ENCODE measurements at regions of chr6 and their contacts with region 1.

Region 1: GRCh38 chr6:13336553-13336952 is 8.2 kb upstream of the TBC1D7 start:
- DNase-seq: peak; percentile 72
- ATAC-seq: peak; percentile 73
- H3K4me3 Mint-ChIP-seq: no peak overlapping the region
- H3K27ac Mint-ChIP-seq: no peak overlapping the region
- H3K4me1 Mint-ChIP-seq: peaks cover 51% of the 10 kb centered on the region
- H3K27me3 Mint-ChIP-seq: no peaks in the 10 kb centered on the region
- CTCF ChIP-seq: no peak

Region 2: DNA sequence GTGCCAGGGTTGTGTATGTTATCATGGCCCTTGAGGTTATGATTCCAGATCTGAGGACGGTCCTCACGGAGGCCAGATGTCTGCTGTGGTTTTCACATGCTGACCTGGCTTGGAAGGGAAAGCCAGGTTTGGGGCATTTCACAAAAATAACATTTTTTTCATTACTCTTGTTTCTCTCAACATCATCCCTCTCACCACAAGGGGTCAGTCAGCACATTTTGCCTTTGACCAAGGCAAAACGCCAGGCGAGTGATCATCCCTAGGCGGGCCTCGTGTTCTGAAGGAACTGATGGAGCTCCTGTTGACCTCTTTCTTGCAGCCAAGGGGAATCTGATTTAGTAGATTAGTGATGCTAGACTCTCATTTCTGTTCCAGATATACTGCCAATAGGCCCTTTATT is 141.7 kb before region 1 on chr6:
- CTCF ChIA-PET with region 1: interaction called, 118 read pairs
- POLR2A ChIA-PET with region 1: interaction called, 3 read pairs
- intact Hi-C with region 1: loop called (anchors 1 kb)
- DNase-seq: peak; percentile 21
- ATAC-seq: peak; percentile 82
- H3K4me3 Mint-ChIP-seq: no peak overlapping the region
- H3K27ac Mint-ChIP-seq: no peak overlapping the region
- H3K4me1 Mint-ChIP-seq: peaks cover 11% of the 10 kb centered on the region
- H3K27me3 Mint-ChIP-seq: peaks cover 4% of the 10 kb centered on the region
- CTCF ChIP-seq: peak; percentile 55

Region 3: DNA sequence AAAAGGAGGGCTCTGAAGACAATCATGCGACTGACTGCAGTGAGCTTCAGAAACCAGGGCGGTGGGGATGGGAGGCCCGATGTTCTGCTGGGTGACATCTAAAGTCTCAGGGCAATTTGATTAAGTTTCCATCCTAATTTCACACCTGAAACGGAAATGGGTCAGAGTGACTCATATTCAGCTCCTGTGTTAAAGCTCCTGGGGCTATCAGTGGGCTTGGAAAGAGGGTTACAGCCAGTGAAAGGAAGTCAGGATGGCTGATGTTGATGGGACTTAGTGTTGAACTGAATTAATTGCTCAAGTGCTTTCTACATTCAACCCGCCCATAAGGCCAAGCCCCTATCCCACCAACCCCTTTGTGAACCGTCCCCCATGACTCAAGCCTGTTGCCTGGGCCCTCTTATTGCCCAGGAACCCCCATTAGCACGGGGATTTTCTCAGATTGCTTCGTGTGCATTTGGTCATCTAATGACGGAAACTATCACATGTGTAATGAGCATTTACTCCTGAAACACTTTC is 38.9 kb after region 1 on chr6:
- CTCF ChIA-PET with region 1: interaction called, 27 read pairs
- POLR2A ChIA-PET with region 1: interaction called, 4 read pairs
- intact Hi-C with region 1: no loop called
- DNase-seq: no peak
- ATAC-seq: peak; percentile 77
- H3K4me3 Mint-ChIP-seq: no peak overlapping the region
- H3K27ac Mint-ChIP-seq: peak overlapping the region; percentile 50
- H3K4me1 Mint-ChIP-seq: peaks cover 55% of the 10 kb centered on the region
- H3K27me3 Mint-ChIP-seq: no peaks in the 10 kb centered on the region
- CTCF ChIP-seq: no peak

Region 4: GRCh38 chr6:13526727-13527670 is 190.4 kb after region 1 on chr6:
- CTCF ChIA-PET with region 1: interaction called, 3 read pairs
- POLR2A ChIA-PET with region 1: no interaction called
- intact Hi-C with region 1: loop called (anchors 2 kb)
- DNase-seq: peak; percentile 41
- ATAC-seq: peak; percentile 90
- H3K4me3 Mint-ChIP-seq: peak overlapping the region; percentile 3
- H3K27ac Mint-ChIP-seq: peak overlapping the region; percentile 78
- H3K4me1 Mint-ChIP-seq: peaks cover 47% of the 10 kb centered on the region
- H3K27me3 Mint-ChIP-seq: no peaks in the 10 kb centered on the region
- CTCF ChIP-seq: no peak

Region 5: DNA sequence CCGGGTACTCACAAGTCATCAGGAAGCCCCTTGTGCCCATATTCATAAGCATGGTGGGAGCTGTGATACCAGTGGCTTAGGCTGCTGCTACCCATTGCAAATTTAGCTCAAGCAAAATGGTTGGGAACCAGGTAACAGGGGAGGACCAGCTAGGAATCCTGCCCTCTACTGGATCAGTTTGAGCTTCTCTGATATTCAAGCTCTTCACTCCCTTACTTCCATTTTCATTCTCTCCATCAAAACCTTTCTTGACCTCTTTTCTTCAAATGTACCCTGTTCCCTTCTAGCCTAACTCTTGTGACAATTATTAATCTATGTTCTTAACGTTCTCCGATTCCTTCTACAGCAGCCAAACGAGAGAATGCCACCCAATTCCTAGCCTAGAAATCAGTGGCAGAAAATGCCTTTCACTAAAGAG is 288.3 kb after region 1 on chr6:
- CTCF ChIA-PET with region 1: interaction called, 4 read pairs
- POLR2A ChIA-PET with region 1: no interaction called
- intact Hi-C with region 1: loop called (anchors 2 kb)
- DNase-seq: no peak
- ATAC-seq: peak; percentile 71
- H3K4me3 Mint-ChIP-seq: no peak overlapping the region
- H3K27ac Mint-ChIP-seq: peak overlapping the region; percentile 51
- H3K4me1 Mint-ChIP-seq: peaks cover 5% of the 10 kb centered on the region
- H3K27me3 Mint-ChIP-seq: no peaks in the 10 kb centered on the region
- CTCF ChIP-seq: no peak

Region 6: GRCh38 chr6:13941902-13942301 is 605.3 kb after region 1 on chr6:
- CTCF ChIA-PET with region 1: no interaction called
- POLR2A ChIA-PET with region 1: no interaction called
- intact Hi-C with region 1: no loop called
- DNase-seq: no peak
- ATAC-seq: no peak
- H3K4me3 Mint-ChIP-seq: no peak overlapping the region
- H3K27ac Mint-ChIP-seq: no peak overlapping the region
- H3K4me1 Mint-ChIP-seq: no peaks in the 10 kb centered on the region
- H3K27me3 Mint-ChIP-seq: peaks cover 22% of the 10 kb centered on the region
- CTCF ChIP-seq: no peak